Activated naive CD8-positive, alpha-beta T cell treated with anti-CD3 and anti-CD28 coated beads, Interleukin-2, amount 10 ng/mL, durations not matched to agents 7 days and 5 days (primary cell): ENCODE measurements at regions of chr5 and their contacts with region 1.

Region 1: GRCh38 chr5:39209924-39210323 is 9.4 kb downstream of the FYB1 start:
- DNase-seq: peak; percentile 78
- ATAC-seq: peak; percentile 81
- H3K4me3 Mint-ChIP-seq: peak overlapping the region; percentile 81
- H3K27ac Mint-ChIP-seq: peak overlapping the region; percentile 92
- H3K4me1 Mint-ChIP-seq: peaks cover 73% of the 10 kb centered on the region
- H3K27me3 Mint-ChIP-seq: no peaks in the 10 kb centered on the region

Region 2: GRCh38 chr5:39164529-39165402 is 45.2 kb before region 1 on chr5:
- POLR2A ChIA-PET with region 1: interaction called, 17 read pairs
- DNase-seq: no peak
- ATAC-seq: peak; percentile 84
- H3K4me3 Mint-ChIP-seq: peak overlapping the region; percentile 74
- H3K27ac Mint-ChIP-seq: peak overlapping the region; percentile 78
- H3K4me1 Mint-ChIP-seq: peaks cover 63% of the 10 kb centered on the region
- H3K27me3 Mint-ChIP-seq: no peaks in the 10 kb centered on the region

Region 3: GRCh38 chr5:39194466-39195136 is 15.3 kb before region 1 on chr5:
- POLR2A ChIA-PET with region 1: interaction called, 86 read pairs
- DNase-seq: no peak
- ATAC-seq: peak; percentile 15
- H3K4me3 Mint-ChIP-seq: peak overlapping the region; percentile 88
- H3K27ac Mint-ChIP-seq: peak overlapping the region; percentile 89
- H3K4me1 Mint-ChIP-seq: peaks cover 69% of the 10 kb centered on the region
- H3K27me3 Mint-ChIP-seq: no peaks in the 10 kb centered on the region

Region 4: GRCh38 chr5:39224196-39224761 is 14.4 kb after region 1 on chr5:
- POLR2A ChIA-PET with region 1: no interaction called
- DNase-seq: no peak
- ATAC-seq: no peak
- H3K4me3 Mint-ChIP-seq: no peak overlapping the region
- H3K27ac Mint-ChIP-seq: no peak overlapping the region
- H3K4me1 Mint-ChIP-seq: peaks cover 8% of the 10 kb centered on the region
- H3K27me3 Mint-ChIP-seq: no peaks in the 10 kb centered on the region

Region 5: DNA sequence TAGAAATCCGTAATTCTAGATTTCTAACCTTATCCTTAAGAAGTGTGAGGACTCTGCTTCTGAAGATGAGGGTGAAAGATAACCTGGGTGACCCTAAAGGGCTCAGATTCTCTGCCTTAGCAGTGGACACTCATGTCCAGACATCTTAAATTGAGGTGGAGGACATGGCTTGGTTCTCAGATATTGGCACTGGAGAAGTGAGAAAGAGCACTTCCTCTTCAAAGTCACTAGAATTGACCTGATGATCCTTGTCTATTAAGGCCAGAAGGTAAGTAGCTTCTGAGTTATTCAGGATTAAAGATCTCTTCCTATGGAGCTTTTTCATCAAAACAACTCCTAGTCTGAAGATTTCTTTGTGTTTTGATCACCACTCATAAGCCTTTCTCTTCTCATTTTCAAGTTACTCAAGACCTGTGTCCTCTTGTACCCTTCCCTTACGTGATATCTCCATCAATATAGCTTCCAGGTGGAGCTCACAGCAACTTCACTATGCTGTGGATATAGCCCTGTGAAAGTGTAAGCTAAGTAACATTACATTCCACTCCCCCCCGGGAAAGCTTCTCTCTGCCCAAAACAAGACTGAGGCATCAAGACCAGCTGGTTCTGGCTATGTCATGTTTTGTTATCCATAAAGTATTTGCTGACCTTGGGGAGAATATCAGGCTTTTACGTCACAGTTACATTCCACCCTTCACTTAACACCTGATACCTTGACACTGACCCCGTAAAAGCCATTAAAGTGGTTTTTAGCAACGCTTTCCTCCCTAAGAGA is 99.8 kb after region 1 on chr5:
- POLR2A ChIA-PET with region 1: no interaction called
- DNase-seq: no peak
- ATAC-seq: no peak
- H3K4me3 Mint-ChIP-seq: no peak overlapping the region
- H3K27ac Mint-ChIP-seq: no peak overlapping the region
- H3K4me1 Mint-ChIP-seq: no peaks in the 10 kb centered on the region
- H3K27me3 Mint-ChIP-seq: peaks cover 5% of the 10 kb centered on the region

Region 6: GRCh38 chr5:39340506-39340905 is 130.6 kb after region 1 on chr5:
- POLR2A ChIA-PET with region 1: no interaction called
- DNase-seq: no peak
- ATAC-seq: no peak
- H3K4me3 Mint-ChIP-seq: no peak overlapping the region
- H3K27ac Mint-ChIP-seq: no peak overlapping the region
- H3K4me1 Mint-ChIP-seq: no peaks in the 10 kb centered on the region
- H3K27me3 Mint-ChIP-seq: peaks cover 2% of the 10 kb centered on the region